ENCODE measurements at regions of chr7 and their contacts with region 1.

Region 1: GRCh38 chr7:142771353-142771723 is 568 bp downstream of the PRSS2 start:
- DNase-seq: no peak
- H3K4me3 ChIP-seq: no peak overlapping the region
- H3K27ac ChIP-seq: no peak overlapping the region
- H3K4me1 ChIP-seq: peaks cover 0 to under 1% (median 0%) of the 10 kb centered on the region in 4 donors
- H3K27me3 ChIP-seq: peaks cover 0 to 4% (median 0%) of the 10 kb centered on the region in 3 donors
- CTCF ChIP-seq: no peak
- EP300 ChIP-seq: no peak
- POLR2A ChIP-seq: no peak

Region 2: GRCh38 chr7:142612237-142612881 is 159.0 kb before region 1 on chr7:
- intact Hi-C with region 1: loop called (anchors 10 kb)
- DNase-seq: no peak
- H3K4me3 ChIP-seq: no peak overlapping the region
- H3K27ac ChIP-seq: no peak overlapping the region
- H3K4me1 ChIP-seq: no peaks in the 10 kb centered on the region
- H3K27me3 ChIP-seq: peaks cover 0 to 21% (median 0%) of the 10 kb centered on the region in 3 donors
- CTCF ChIP-seq: no peak
- EP300 ChIP-seq: no peak
- POLR2A ChIP-seq: no peak

Region 3: GRCh38 chr7:142714375-142714774 is 57.0 kb before region 1 on chr7:
- intact Hi-C with region 1: no loop called
- DNase-seq: peak in 1 of 2 donors; percentile 25
- H3K4me3 ChIP-seq: no peak overlapping the region
- H3K27ac ChIP-seq: no peak overlapping the region
- H3K4me1 ChIP-seq: no peaks in the 10 kb centered on the region
- H3K27me3 ChIP-seq: no peaks in the 10 kb centered on the region
- CTCF ChIP-seq: no peak
- EP300 ChIP-seq: no peak
- POLR2A ChIP-seq: no peak

Region 4: GRCh38 chr7:142954680-142955268 is 183.4 kb after region 1 on chr7:
- intact Hi-C with region 1: no loop called
- DNase-seq: no peak
- H3K4me3 ChIP-seq: no peak overlapping the region
- H3K27ac ChIP-seq: no peak overlapping the region
- H3K4me1 ChIP-seq: peaks cover 0 to 8% (median 3%) of the 10 kb centered on the region in 4 donors
- H3K27me3 ChIP-seq: no peaks in the 10 kb centered on the region
- CTCF ChIP-seq: no peak
- EP300 ChIP-seq: no peak
- POLR2A ChIP-seq: no peak

Measured in stomach (tissue), 19 donors.